Activated naive CD4-positive, alpha-beta T cell treated with anti-CD3 and anti-CD28 coated beads for 36 hours (primary cell): ENCODE measurements at regions of chr13 and their contacts with region 1.

Region 1: DNA sequence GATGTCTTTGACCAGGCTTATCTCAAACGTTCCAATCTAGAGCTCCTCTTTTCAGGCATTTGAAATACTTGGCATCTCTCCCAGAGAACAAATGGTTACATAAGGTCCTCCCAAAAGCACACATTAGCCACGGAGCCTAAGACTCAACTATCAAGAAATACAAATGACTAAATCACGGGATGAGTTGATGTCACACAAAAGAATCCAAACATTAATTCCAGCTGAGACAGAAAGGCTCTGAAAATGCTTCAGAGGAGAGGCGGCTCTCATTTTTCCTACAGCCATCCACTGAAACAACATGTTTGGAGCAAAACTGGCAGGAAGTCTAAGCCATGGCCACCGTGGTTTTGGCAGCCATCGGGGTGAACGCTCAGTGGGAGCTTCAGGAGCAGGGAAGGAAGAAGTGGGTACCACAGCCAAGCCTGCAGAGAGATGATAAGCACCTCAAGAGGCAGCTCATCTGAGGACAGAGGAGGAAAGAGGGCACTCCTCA is 122.5 kb downstream of the STK24 start:
- DNase-seq: no peak
- H3K4me3 Mint-ChIP-seq: no peak overlapping the region
- H3K27ac Mint-ChIP-seq: no peak overlapping the region
- H3K4me1 Mint-ChIP-seq: peaks cover 19% of the 10 kb centered on the region
- H3K27me3 Mint-ChIP-seq: no peaks in the 10 kb centered on the region

Region 2: DNA sequence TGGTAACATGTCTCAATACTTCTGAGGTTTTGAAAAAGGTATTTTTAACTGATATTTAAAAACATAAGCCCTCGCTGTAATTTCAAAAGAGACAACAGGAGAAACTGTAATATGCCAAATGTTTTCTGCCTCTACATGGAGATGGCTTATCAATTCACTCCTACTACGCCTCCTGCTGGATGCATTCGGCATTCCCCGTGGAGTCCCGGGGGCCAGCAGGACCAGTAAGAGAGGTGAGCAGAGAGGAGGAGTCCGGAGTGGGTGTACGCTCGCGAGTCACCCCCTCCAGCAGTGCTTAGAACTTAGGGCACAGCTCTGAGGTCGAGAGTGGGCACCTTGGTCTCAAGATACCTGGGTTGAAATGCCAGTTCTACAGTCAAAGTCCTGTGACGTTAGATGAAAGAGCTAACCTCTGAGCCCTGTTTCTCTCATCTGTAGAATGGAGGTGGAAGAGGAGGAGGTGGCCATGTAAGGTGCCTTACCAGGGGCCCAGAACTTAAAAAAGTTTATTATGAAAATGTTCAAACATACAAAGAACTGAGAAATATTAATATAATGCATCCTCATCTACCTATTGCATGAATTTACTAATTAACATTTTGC is 12.3 kb after region 1 on chr13:
- CTCF ChIA-PET with region 1: interaction called, 14 read pairs
- intact Hi-C with region 1: no loop called
- DNase-seq: peak; percentile 60
- H3K4me3 Mint-ChIP-seq: no peak overlapping the region
- H3K27ac Mint-ChIP-seq: no peak overlapping the region
- H3K4me1 Mint-ChIP-seq: peaks cover 19% of the 10 kb centered on the region
- H3K27me3 Mint-ChIP-seq: no peaks in the 10 kb centered on the region

Region 3: GRCh38 chr13:98632961-98633360 is 178.5 kb after region 1 on chr13:
- CTCF ChIA-PET with region 1: no interaction called
- intact Hi-C with region 1: no loop called
- DNase-seq: no peak
- H3K4me3 Mint-ChIP-seq: no peak overlapping the region
- H3K27ac Mint-ChIP-seq: no peak overlapping the region
- H3K4me1 Mint-ChIP-seq: peaks cover 2% of the 10 kb centered on the region
- H3K27me3 Mint-ChIP-seq: no peaks in the 10 kb centered on the region